Colonic mucosa (tissue), 4 donors: ENCODE measurements at regions of chr4 and their contacts with region 1.

Region 1: DNA sequence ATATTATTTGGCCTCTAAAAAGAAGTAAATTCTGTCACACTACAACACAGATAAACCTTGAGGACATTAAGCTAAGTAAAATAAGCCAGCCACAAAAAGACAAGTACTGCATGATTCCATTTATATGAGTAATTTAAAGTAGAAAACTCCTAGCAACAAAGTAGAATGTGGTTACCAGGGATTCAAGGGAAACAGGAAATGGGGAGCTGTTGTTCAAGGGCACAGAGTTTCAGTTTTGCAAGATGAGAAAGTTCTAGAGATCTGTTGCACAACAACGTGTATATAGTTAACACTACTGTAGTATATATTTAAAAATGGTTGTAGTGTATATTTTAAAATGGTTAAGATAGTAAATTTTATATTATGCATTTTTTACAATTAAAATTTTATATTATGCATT is 25.4 kb downstream of the SEC31A start:
- DNase-seq: no peak
- H3K4me3 ChIP-seq: no peak overlapping the region
- H3K27ac ChIP-seq: no peak overlapping the region
- H3K4me1 ChIP-seq: no peaks in the 10 kb centered on the region
- H3K27me3 ChIP-seq: no peaks in the 10 kb centered on the region
- CTCF ChIP-seq: no peak

Region 2: DNA sequence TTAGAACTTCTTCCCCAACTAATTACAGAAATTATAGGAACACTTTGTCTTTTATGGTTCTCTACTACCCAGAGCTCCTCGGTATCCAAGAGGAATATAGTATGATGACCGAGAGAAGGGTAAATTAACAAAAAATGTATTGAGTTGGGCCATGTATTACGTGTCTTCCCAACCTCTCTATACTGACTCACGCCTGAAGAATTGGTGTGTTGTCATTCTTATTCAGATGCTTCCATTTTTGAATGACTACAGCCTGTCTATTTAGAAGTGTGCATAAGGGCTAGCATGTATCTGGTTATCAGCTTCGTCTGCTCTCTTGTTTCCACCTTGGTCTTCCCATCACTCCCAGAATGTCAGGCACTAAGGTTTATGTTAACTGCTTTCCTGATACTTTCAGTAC is 42.5 kb before region 1 on chr4:
- intact Hi-C with region 1: loop called (anchors 10 kb)
- DNase-seq: no peak
- H3K4me3 ChIP-seq: no peak overlapping the region
- H3K27ac ChIP-seq: no peak overlapping the region
- H3K4me1 ChIP-seq: no peaks in the 10 kb centered on the region
- H3K27me3 ChIP-seq: no peaks in the 10 kb centered on the region
- CTCF ChIP-seq: no peak